Thyroid gland (tissue), 4 donors: ENCODE measurements at regions of chr12 and their contacts with region 1.

Region 1: DNA sequence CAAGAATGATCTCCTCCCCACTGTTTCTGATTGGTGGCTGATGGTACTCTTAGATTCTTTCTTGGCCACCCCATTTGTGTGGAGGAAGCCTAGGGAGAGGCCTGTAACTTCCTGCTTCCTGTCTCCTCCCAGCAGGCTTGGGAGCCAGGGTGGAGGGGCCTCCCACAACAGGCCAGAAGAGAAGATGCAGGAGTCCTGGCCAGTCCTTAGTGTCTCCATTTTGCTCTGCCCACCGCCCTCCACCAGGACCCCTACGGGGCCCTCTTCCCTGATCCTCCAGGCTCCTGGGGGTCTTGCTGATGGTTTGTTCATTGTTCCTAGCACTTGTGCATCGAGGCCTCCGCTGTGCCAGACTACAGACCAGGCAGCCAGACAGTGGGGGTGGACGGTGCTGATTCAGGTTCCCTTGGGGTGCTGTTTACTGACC is 6.8 kb downstream of the TSPAN9 start:
- DNase-seq: no peak
- H3K4me3 ChIP-seq: no peak overlapping the region
- H3K27ac ChIP-seq: peak overlapping the region in 1 of 3 donors; percentile 22
- H3K4me1 ChIP-seq: peaks cover 0 to 12% of the 10 kb centered on the region in 2 donors
- H3K27me3 ChIP-seq: no peaks in the 10 kb centered on the region
- CTCF ChIP-seq: no peak
- POLR2A ChIP-seq: no peak

Region 2: DNA sequence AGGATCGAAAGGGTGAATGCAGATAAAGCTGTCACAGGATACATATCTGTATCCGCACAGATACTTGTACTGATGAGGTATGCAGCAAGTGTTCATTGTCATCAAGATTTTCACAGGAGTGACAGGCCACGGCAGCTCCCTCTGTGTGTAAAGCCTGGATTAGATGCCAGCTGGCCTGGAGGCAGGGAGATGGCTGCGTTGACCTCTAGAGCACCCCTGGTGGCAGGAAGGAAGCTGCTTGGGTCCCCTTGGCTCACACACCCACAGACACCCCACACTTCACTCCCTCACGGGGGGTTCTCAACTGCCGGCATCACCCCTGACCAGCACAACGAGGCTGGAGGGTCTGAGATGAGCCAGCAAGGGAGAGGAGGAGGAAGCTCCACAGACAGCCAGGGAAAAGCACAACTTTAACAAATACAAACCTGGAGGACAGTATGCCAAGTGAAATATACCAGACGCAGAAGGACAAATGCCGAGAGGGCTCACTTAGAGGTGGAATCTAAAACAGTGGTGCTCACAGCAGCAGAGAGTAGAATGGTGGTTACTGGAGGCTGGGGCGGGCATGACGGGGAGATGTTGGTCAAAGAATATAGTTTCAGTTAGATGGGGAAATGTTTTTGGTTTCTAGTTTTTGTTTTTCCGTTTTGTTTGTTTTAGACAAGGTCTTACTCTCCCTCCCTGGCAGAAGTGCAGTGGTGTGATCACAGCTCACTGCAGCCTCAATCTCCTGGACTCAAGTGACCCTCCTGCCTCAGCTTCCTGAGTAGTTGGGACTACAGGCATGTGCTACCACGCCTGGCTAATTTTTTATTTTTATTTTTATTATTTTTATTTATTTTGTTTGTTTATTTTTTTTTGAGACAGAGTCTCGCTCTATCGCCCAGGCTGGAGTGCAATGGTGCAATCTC is 79.0 kb before region 1 on chr12:
- intact Hi-C with region 1: no loop called
- DNase-seq: peak; percentile 59 to 71
- H3K4me3 ChIP-seq: no peak overlapping the region
- H3K27ac ChIP-seq: peak overlapping the region; percentile 42 to 79 (median 60)
- H3K4me1 ChIP-seq: peaks cover 7 to 9% of the 10 kb centered on the region in 2 donors
- H3K27me3 ChIP-seq: no peaks in the 10 kb centered on the region
- CTCF ChIP-seq: peak in 2 of 6 experiments; percentile 12 to 26
- POLR2A ChIP-seq: no peak

Region 3: GRCh38 chr12:3202734-3203446 is 119.0 kb after region 1 on chr12:
- intact Hi-C with region 1: loop called (anchors 5 kb)
- DNase-seq: peak; percentile 45 to 48
- H3K4me3 ChIP-seq: no peak overlapping the region
- H3K27ac ChIP-seq: no peak overlapping the region
- H3K4me1 ChIP-seq: peaks cover 5 to 55% of the 10 kb centered on the region in 2 donors
- H3K27me3 ChIP-seq: no peaks in the 10 kb centered on the region
- CTCF ChIP-seq: peak; percentile 72 to 97 (median 86)
- POLR2A ChIP-seq: no peak